B cell (primary cell): ENCODE measurements at regions of chr20 and their contacts with region 1.

Region 1: DNA sequence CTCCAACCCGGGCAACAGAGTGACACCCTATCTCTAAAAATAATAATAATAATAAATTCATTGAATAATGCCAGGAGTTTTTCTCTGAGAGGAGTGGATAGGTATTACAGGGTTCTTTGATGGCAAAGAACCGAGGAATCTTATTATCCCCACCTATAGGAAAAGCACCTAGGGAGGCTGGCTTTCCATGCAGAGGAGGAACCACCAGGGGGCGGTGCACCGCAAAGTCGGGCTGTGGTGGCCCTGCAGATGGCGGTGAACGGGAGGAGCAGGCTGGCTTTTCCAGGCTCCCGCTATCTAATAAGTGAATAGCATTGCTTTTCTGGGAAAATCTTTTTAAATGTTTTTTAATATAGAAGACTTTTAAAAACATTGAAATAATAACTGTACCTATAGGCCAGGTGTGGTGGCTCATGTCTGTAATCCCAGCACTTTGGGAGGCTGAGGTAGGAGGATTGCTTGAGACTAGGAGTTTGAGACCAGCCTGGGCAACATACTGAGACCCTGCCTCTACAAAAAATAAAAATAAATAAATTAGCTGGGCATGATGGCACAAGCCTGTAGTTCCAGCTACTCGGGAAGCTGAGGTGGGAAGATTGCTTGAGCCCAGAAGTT is 864.2 kb downstream of the KIF16B start:
- DNase-seq: peak; percentile 67
- ATAC-seq: peak; percentile 47
- H3K4me3 ChIP-seq: no peak overlapping the region
- H3K4me3 Mint-ChIP-seq: no peak overlapping the region
- H3K27ac ChIP-seq: no peak overlapping the region
- H3K27ac Mint-ChIP-seq: no peak overlapping the region
- H3K4me1 ChIP-seq: no peaks in the 10 kb centered on the region
- H3K4me1 Mint-ChIP-seq: peaks cover 4% of the 10 kb centered on the region
- H3K27me3 ChIP-seq: no peaks in the 10 kb centered on the region
- H3K27me3 Mint-ChIP-seq: no peaks in the 10 kb centered on the region
- CTCF ChIP-seq: peak; percentile 81

Region 2: GRCh38 chr20:15235471-15236198 is 473.5 kb before region 1 on chr20:
- CTCF ChIA-PET with region 1: no interaction called
- POLR2A ChIA-PET with region 1: no interaction called
- intact Hi-C with region 1: no loop called
- DNase-seq: no peak
- ATAC-seq: no peak
- H3K4me3 ChIP-seq: no peak overlapping the region
- H3K4me3 Mint-ChIP-seq: no peak overlapping the region
- H3K27ac ChIP-seq: no peak overlapping the region
- H3K27ac Mint-ChIP-seq: no peak overlapping the region
- H3K4me1 ChIP-seq: peaks cover 0 to 8% of the 10 kb centered on the region in 2 donors
- H3K4me1 Mint-ChIP-seq: peaks cover 12% of the 10 kb centered on the region
- H3K27me3 ChIP-seq: no peaks in the 10 kb centered on the region
- H3K27me3 Mint-ChIP-seq: no peaks in the 10 kb centered on the region
- CTCF ChIP-seq: no peak

Region 3: GRCh38 chr20:15930311-15931305 is 221.5 kb after region 1 on chr20:
- CTCF ChIA-PET with region 1: interaction called, 58 read pairs
- POLR2A ChIA-PET with region 1: no interaction called
- intact Hi-C with region 1: loop called (anchors 1 kb)
- DNase-seq: peak; percentile 44
- ATAC-seq: peak; percentile 61
- H3K4me3 ChIP-seq: no peak overlapping the region
- H3K4me3 Mint-ChIP-seq: no peak overlapping the region
- H3K27ac ChIP-seq: no peak overlapping the region
- H3K27ac Mint-ChIP-seq: peak overlapping the region; percentile 39
- H3K4me1 ChIP-seq: peaks cover 12 to 15% of the 10 kb centered on the region in 2 donors
- H3K4me1 Mint-ChIP-seq: peaks cover 26% of the 10 kb centered on the region
- H3K27me3 ChIP-seq: no peaks in the 10 kb centered on the region
- H3K27me3 Mint-ChIP-seq: no peaks in the 10 kb centered on the region
- CTCF ChIP-seq: peak; percentile 64

Region 4: DNA sequence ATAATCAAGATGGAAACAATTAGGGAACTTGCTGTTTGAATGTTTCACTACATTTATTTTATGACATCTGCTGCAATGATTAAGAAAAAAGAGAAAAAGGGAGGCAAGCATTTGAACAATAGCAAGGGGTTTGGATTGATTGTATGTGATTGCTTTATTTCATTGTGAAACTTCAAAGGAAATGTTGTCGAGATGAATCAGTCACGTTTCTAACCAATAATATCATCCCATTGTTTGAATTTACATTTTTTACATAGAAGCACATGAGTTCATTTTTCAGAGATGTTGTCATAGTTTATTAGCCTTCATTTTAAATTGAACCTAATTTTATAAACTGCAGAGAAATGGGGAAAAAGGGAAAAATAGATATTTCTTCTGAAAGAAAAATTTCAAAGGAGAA is 292.2 kb after region 1 on chr20:
- CTCF ChIA-PET with region 1: no interaction called
- POLR2A ChIA-PET with region 1: no interaction called
- intact Hi-C with region 1: no loop called
- DNase-seq: no peak
- ATAC-seq: no peak
- H3K4me3 ChIP-seq: no peak overlapping the region
- H3K4me3 Mint-ChIP-seq: no peak overlapping the region
- H3K27ac ChIP-seq: no peak overlapping the region
- H3K27ac Mint-ChIP-seq: no peak overlapping the region
- H3K4me1 ChIP-seq: peaks cover 0 to 9% of the 10 kb centered on the region in 2 donors
- H3K4me1 Mint-ChIP-seq: peaks cover 15% of the 10 kb centered on the region
- H3K27me3 ChIP-seq: no peaks in the 10 kb centered on the region
- H3K27me3 Mint-ChIP-seq: no peaks in the 10 kb centered on the region
- CTCF ChIP-seq: no peak

Region 5: GRCh38 chr20:16241915-16242314 is 532.8 kb after region 1 on chr20:
- CTCF ChIA-PET with region 1: interaction called, 24 read pairs
- POLR2A ChIA-PET with region 1: no interaction called
- intact Hi-C with region 1: loop called (anchors 1 kb)
- DNase-seq: peak; percentile 46
- ATAC-seq: peak; percentile 43
- H3K4me3 ChIP-seq: no peak overlapping the region
- H3K4me3 Mint-ChIP-seq: no peak overlapping the region
- H3K27ac ChIP-seq: no peak overlapping the region
- H3K27ac Mint-ChIP-seq: no peak overlapping the region
- H3K4me1 ChIP-seq: peaks cover 10 to 11% of the 10 kb centered on the region in 2 donors
- H3K4me1 Mint-ChIP-seq: peaks cover 10% of the 10 kb centered on the region
- H3K27me3 ChIP-seq: no peaks in the 10 kb centered on the region
- H3K27me3 Mint-ChIP-seq: peaks cover 5% of the 10 kb centered on the region
- CTCF ChIP-seq: peak; percentile 37